ENCODE measurements at regions of chr1 and their contacts with region 1.

Region 1: GRCh38 chr1:54297596-54298283 is 97.8 kb downstream of the MRPL37 start:
- DNase-seq: no peak
- H3K4me3 ChIP-seq: no peak overlapping the region
- H3K4me3 Mint-ChIP-seq: no peak overlapping the region
- H3K27ac ChIP-seq: no peak overlapping the region
- H3K27ac Mint-ChIP-seq: peak overlapping the region in 1 of 8 donors; percentile 93
- H3K4me1 ChIP-seq: peaks cover 73% of the 10 kb centered on the region
- H3K4me1 Mint-ChIP-seq: peaks cover 79 to 92% (median 84%) of the 10 kb centered on the region in 3 donors
- H3K27me3 ChIP-seq: no peaks in the 10 kb centered on the region
- H3K27me3 Mint-ChIP-seq: peaks cover 0 to 1% of the 10 kb centered on the region in 2 donors

Region 2: GRCh38 chr1:54384911-54385726 is 87.4 kb after region 1 on chr1:
- CTCF ChIA-PET with region 1: interaction called, 3 read pairs
- POLR2A ChIA-PET with region 1: interaction called, 10 read pairs
- DNase-seq: no peak
- H3K4me3 ChIP-seq: no peak overlapping the region
- H3K4me3 Mint-ChIP-seq: no peak overlapping the region
- H3K27ac ChIP-seq: no peak overlapping the region
- H3K27ac Mint-ChIP-seq: peak overlapping the region in 6 of 8 donors; percentile 24 to 95 (median 54)
- H3K4me1 ChIP-seq: peaks cover 20% of the 10 kb centered on the region
- H3K4me1 Mint-ChIP-seq: peaks cover 65 to 74% (median 66%) of the 10 kb centered on the region in 3 donors
- H3K27me3 ChIP-seq: no peaks in the 10 kb centered on the region
- H3K27me3 Mint-ChIP-seq: no peaks in the 10 kb centered on the region